PC-3 (cell line): ENCODE measurements at regions of chr4 and their contacts with region 1.

Region 1: GRCh38 chr4:38872604-38873006 is 5.0 kb downstream of the FAM114A1 start:
- DNase-seq: peak; percentile 94
- ATAC-seq: peak; percentile 79
- H3K4me3 ChIP-seq: peak overlapping the region; percentile 29; the same call in 1 of the 2 replicates
- H3K27ac ChIP-seq: peak overlapping the region; percentile 80
- H3K4me1 ChIP-seq: peaks cover 42% of the 10 kb centered on the region
- H3K27me3 ChIP-seq: no peaks in the 10 kb centered on the region
- CTCF ChIP-seq: no peak

Region 2: DNA sequence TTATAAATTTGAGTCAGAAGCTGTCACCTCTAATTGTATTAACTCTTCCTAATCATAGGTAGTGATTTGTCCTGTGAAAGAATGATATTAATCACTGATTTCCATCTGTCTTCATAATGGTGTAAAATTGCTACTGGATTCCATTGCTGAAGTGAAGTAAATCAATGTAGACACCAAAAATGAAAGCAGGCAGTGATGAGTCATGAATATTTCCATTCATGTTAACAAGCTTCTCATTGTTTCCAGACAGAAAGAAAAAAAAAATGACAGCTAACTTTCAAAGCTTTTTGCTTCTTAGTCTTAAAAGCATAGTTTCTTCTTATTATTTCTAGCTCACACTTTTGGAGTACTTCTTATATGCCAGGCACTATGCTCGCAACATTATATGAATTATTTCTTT is 16.5 kb after region 1 on chr4:
- CTCF ChIA-PET with region 1: interaction called, 13 read pairs
- POLR2A ChIA-PET with region 1: interaction called, 4 read pairs
- intact Hi-C with region 1: loop called (anchors 2 kb)
- DNase-seq: peak; percentile 68
- ATAC-seq: peak; percentile 29; the same call in 1 of the 2 replicates
- H3K4me3 ChIP-seq: no peak overlapping the region
- H3K27ac ChIP-seq: peak overlapping the region; percentile 77
- H3K4me1 ChIP-seq: peaks cover 22% of the 10 kb centered on the region
- H3K27me3 ChIP-seq: no peaks in the 10 kb centered on the region
- CTCF ChIP-seq: no peak